GM10248 (cell line): ENCODE measurements at regions of chr15 and their contacts with region 1.

Region 1: DNA sequence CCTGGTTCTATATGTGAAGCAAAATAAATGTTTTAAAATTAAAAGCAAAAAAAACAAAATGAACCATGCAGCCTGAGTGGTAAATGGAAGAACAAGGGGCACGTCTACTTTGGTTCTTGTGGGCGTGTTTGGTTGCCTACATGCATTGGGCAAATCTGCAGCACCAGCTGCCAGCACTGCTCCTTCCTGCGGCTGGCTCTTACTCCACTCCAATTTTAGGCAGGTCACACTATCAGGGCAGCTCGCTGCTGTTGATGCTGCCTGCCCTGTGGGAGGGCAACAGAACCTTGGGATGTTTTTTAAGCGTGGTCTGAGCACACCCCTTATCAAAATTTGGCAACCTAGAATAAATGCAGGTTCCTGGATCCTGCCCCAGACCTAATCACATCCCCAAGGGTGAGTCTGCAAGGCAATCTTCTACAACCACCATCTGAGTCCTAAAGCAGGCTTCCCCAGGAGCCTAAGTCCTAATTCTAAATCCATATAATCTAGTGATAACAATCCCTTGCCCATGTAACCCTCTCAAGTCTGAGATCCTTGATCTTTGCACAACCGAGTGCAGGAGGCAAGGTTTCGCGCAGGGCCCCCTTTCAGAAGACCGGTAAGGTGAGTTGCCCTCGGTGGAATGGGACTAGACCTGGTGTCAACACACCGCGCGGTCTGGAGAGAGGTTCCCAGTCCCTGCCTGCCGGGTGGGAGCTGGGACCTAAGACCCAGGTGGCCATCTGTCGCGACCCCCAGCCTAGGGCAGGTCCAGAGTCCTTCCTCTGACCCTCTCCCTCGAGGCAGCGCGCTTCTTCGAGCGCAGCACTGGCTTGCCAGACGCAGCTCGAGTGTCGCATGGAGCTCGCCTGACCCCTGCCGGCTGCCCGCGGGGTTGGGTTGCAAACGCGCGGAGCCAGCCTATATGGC is 15.9 kb downstream of the IVD start:
- DNase-seq: peak; percentile 91
- CTCF ChIP-seq: peak; percentile 94

Region 2: DNA sequence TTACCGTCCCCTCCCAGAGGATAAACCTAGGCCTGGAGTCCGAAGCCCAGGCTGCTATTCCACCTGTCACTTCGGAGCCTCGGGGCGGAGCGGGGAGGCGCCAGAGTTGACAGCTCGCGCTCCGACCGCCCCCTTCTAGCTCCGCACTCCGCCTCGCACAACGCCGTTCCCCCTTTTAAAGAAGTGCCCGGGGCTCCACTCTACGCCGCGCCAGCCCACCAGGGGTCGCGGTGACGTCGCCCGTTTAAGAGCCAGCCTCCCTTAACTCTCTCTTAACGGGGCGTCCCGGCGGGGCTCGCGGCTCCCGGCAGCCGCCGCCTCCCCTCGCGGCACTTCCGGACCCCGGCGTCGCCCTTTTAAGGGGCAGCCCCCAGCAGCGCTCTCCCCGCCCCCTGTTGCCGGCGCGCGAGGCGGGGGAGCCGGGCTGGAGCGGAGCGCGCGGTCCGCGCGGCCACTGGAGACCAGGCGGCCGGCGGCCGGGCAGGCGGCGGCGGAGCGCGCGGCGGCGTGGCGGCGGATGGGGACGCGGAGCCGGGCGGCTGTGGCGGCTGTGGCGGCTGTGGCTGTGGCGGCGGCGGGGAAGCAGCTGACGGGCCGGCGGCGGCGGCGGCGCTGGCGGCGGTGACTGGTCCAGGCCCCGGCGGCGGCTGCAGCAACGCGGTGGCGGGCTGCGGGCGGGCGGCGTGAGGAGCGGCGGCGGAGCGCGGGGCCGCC is 98.1 kb before region 1 on chr15 and contains the start of gene INAFM2:
- CTCF ChIA-PET with region 1: interaction called, 14 read pairs
- POLR2A ChIA-PET with region 1: no interaction called
- DNase-seq: peak; percentile 96
- CTCF ChIP-seq: peak; percentile 40

Region 3: DNA sequence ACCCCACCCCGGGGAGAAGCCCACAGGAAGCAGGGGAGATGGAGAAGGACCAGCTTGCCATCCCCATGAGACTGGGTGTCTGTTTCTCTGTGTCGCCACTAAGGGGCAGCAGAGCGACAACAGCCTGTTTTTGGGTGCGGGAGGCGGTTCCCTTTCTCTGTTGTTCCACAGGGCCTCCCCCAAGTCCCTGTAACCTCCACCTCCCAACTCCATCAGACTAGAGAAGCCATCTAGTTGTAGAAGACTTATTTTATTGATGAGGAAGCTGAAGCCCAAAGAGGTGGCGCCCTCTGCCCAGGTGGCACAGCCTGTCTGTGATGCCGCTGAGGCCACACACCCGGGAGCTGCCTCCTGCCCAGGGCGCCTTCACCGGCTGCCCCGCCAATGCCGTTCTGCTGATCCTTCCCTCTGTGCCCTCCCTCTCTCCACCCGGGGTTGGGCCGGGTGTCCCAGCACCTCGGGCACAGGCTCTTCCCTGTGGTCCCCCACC is 76.8 kb before region 1 on chr15:
- CTCF ChIA-PET with region 1: interaction called, 125 read pairs
- POLR2A ChIA-PET with region 1: no interaction called
- DNase-seq: peak; percentile 88
- CTCF ChIP-seq: peak; percentile 89

Region 4: GRCh38 chr15:40398413-40398873 is 23.1 kb before region 1 on chr15:
- CTCF ChIA-PET with region 1: interaction called, 44 read pairs
- POLR2A ChIA-PET with region 1: no interaction called
- DNase-seq: peak; percentile 48
- CTCF ChIP-seq: no peak

Region 5: GRCh38 chr15:40405501-40406381 is 15.8 kb before region 1 on chr15 and contains the start of gene IVD:
- CTCF ChIA-PET with region 1: interaction called, 44 read pairs
- POLR2A ChIA-PET with region 1: no interaction called
- DNase-seq: peak; percentile 95
- CTCF ChIP-seq: no peak

Region 6: DNA sequence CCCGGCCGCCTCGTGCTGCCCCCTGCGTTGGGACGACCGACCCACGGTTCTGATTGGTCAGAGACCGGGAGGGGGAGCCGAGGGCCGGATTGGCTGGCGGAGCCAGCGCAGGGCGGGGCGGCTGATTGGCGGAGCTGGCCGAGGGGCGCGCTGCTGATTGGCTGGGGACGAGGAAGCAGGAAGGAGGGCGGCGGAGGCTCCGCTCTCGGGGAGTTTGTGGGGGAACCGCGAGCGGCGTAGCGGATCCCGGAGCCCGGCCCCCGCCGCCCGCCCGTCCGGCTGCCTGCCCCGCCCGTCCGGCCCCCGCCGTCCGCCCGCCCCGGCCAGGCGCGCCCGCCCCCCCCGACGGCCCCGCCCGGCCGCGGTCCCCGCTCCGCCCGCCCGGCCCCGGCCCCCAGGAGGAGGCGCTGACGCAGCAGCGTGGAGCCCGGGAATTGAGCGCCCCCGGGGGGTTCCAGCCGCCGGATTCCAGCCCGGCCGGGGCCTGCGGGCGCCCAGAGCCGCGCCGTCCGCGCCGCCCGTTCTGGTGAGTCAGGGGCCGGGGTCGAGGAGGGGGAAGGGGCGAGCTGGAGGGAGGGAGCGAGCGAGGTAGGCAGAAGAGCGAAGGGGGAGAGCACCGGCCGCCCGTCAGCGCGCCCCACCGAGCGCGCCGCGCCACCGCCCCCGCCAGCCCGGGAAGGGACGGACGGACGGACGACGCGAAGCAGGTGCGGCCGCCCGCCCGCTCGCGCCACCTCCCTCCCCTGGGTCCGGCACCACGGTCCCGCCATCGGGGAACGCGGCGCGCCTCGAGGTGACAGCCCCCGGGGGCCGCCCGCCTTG is 19.5 kb after region 1 on chr15 and contains the start of gene BAHD1:
- CTCF ChIA-PET with region 1: interaction called, 12 read pairs
- POLR2A ChIA-PET with region 1: no interaction called
- DNase-seq: peak; percentile 100
- CTCF ChIP-seq: peak; percentile 18

Region 7: GRCh38 chr15:40716165-40716564 is 294.7 kb after region 1 on chr15:
- CTCF ChIA-PET with region 1: no interaction called
- POLR2A ChIA-PET with region 1: no interaction called
- DNase-seq: no peak
- CTCF ChIP-seq: no peak